Activated T-helper 1 cell treated with anti-CD3 and anti-CD28 coated beads, Interleukin-12 subunit alpha, Interleukin-12 subunit beta, Interleukin-2, Interleukin-4 antibody, amounts not matched to agents 30 ng/mL and 10 ng/mL and 1 ng/mL, durations not matched to agents 14 hours and 24 hours and 36 hours (primary cell): ENCODE measurements at regions of chr10 and their contacts with region 1.

Region 1: GRCh38 chr10:34637418-34637911 is 177.6 kb downstream of the PARD3 start:
- DNase-seq: peak; percentile 34
- H3K4me3 Mint-ChIP-seq: no peak overlapping the region
- H3K27ac Mint-ChIP-seq: no peak overlapping the region
- H3K4me1 Mint-ChIP-seq: peaks cover 14% of the 10 kb centered on the region
- H3K27me3 Mint-ChIP-seq: peaks cover 6% of the 10 kb centered on the region

Region 2: GRCh38 chr10:32795598-32796183 is 1841.8 kb before region 1 on chr10:
- intact Hi-C with region 1: loop called (anchors 1 kb)
- DNase-seq: no peak
- H3K4me3 Mint-ChIP-seq: no peak overlapping the region
- H3K27ac Mint-ChIP-seq: no peak overlapping the region
- H3K4me1 Mint-ChIP-seq: no peaks in the 10 kb centered on the region
- H3K27me3 Mint-ChIP-seq: peaks cover 2% of the 10 kb centered on the region

Region 3: GRCh38 chr10:34384372-34384771 is 253.1 kb before region 1 on chr10:
- intact Hi-C with region 1: no loop called
- DNase-seq: no peak
- H3K4me3 Mint-ChIP-seq: no peak overlapping the region
- H3K27ac Mint-ChIP-seq: no peak overlapping the region
- H3K4me1 Mint-ChIP-seq: no peaks in the 10 kb centered on the region
- H3K27me3 Mint-ChIP-seq: no peaks in the 10 kb centered on the region

Region 4: GRCh38 chr10:34522546-34522945 is 114.9 kb before region 1 on chr10:
- intact Hi-C with region 1: loop called (anchors 1 kb)
- DNase-seq: no peak
- H3K4me3 Mint-ChIP-seq: no peak overlapping the region
- H3K27ac Mint-ChIP-seq: no peak overlapping the region
- H3K4me1 Mint-ChIP-seq: peaks cover 6% of the 10 kb centered on the region
- H3K27me3 Mint-ChIP-seq: peaks cover 4% of the 10 kb centered on the region